ENCODE measurements at regions of chr4 and their contacts with region 1.

Region 1: DNA sequence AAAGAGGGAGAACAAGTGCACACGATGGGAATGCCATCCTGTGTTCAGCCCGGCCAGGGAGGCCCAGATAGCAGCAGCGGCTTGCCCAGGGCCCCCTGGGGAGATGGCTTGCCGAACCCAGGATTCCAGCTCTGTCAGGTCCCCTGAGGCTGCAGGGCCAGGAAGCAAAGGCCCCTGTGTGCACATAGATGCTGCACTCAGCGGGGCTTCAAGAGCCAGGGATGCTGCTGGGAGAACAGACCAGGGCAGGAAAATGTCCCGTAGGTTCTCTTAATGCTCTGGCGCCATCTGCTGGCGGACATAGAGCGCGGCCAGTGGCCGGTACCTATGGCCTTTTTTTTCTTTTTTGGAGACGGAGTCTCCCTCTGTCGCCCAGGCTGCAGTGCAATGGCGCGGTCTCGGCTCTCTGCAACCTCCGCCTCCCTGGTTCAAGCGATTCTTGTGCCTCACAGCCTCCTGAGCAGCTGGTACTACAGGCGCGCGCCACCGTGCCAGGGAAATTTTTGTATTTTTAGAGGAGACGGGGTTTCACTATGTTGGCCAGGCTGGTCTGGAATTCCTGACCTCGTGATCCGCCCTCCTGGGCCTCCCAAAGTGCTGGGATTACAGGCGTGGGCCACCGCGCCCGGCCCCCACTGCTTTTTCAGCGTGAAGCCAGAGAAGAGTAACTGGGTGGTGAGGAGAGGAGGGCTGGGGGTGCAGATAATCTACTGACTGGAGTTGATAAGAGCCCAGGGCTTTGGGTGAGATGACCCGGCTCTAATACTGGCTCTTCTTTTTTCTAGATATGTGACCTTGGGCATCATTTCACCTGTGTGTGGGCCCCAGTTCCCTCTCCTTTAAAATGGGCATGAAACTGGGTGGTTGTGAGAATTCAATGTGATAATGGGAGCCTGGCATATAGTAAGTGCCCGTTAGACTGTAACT is 22.5 kb downstream of the MED28 start:
- DNase-seq: peak; percentile 66 to 67
- H3K4me3 ChIP-seq: no peak overlapping the region
- H3K27ac ChIP-seq: no peak overlapping the region
- H3K4me1 ChIP-seq: no peaks in the 10 kb centered on the region
- H3K27me3 ChIP-seq: no peaks in the 10 kb centered on the region
- CTCF ChIP-seq: peak; percentile 74 to 86 (median 78)
- POLR2A ChIP-seq: no peak

Region 2: DNA sequence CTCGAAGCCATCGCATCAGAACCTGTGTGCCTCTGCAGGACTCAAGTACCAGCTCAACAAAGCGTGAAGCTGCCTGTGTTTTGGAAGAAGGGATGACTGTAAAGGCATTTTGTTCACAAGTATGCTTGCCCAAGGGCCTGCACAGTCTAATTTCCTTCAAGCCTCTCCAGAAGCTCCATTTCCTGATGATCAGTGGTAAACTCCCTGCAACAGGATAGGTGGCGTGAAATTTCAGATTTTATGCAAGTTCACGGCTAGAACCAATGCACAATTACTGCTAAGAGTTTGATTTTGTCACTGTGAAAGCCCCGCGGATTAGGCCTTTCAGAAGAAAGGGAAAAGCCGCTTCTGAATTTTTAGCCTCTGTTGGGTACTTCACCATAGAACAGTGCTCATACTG is 1321.5 kb before region 1 on chr4:
- intact Hi-C with region 1: no loop called
- DNase-seq: no peak
- H3K4me3 ChIP-seq: no peak overlapping the region
- H3K27ac ChIP-seq: no peak overlapping the region
- H3K4me1 ChIP-seq: no peaks in the 10 kb centered on the region
- H3K27me3 ChIP-seq: no peaks in the 10 kb centered on the region
- CTCF ChIP-seq: no peak
- POLR2A ChIP-seq: no peak

Region 3: DNA sequence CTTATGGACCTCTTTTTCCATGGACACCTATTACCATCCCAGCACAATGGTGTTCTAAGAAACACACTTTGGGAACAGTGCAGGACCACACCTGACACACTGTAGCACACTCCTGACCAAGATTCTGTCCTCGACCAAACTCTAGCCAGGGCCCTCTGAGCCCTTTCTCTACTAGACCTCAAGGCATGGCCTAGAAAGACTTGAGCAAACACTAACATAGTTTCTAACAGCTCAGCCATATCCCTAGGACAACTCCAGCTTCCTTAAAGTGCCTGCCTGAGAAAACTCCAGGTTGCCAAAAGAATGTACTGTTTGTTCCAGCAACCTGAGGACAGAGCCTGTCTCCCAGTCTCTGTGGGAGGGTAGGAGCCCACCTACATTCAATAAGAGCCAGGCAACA is 173.4 kb before region 1 on chr4:
- intact Hi-C with region 1: no loop called
- DNase-seq: no peak
- H3K4me3 ChIP-seq: no peak overlapping the region
- H3K27ac ChIP-seq: no peak overlapping the region
- H3K4me1 ChIP-seq: no peaks in the 10 kb centered on the region
- H3K27me3 ChIP-seq: no peaks in the 10 kb centered on the region
- CTCF ChIP-seq: no peak
- POLR2A ChIP-seq: no peak

Region 4: GRCh38 chr4:17552427-17552826 is 84.5 kb before region 1 on chr4:
- intact Hi-C with region 1: loop called (anchors 10 kb)
- DNase-seq: no peak
- H3K4me3 ChIP-seq: no peak overlapping the region
- H3K27ac ChIP-seq: no peak overlapping the region
- H3K4me1 ChIP-seq: no peaks in the 10 kb centered on the region
- H3K27me3 ChIP-seq: no peaks in the 10 kb centered on the region
- CTCF ChIP-seq: no peak
- POLR2A ChIP-seq: no peak